GM10248 (cell line): ENCODE measurements at regions of chr10 and their contacts with region 1.

Region 1: GRCh38 chr10:48670978-48671913 is 13.4 kb upstream of the WDFY4 start:
- DNase-seq: peak; percentile 85
- CTCF ChIP-seq: no peak

Region 2: DNA sequence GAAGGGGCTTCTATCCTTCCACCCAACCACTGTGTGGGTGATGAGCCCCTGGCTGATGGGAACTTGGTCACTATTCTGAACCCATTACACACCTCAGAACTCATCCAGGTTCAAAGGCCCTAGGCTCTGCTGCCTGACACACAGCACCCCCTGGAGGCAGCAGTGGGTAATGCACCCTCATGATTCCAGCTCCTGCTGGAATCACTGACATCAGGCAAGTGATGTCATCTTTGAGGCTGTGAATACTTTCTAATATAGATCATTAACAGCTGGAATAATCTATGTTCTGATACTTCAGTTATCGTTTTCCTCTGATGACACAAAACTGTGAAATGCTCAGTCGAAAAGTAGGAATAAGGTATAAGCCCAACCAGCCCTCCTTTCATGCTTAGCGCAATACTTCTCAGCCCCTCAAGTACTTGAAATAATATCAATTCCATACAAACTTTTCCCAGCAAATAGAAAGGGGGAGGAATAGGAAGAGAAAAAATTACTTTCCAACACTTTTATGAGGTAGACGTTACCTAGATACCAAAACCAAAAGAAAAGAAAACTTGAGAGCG is 1330.6 kb before region 1 on chr10:
- CTCF ChIA-PET with region 1: no interaction called
- POLR2A ChIA-PET with region 1: no interaction called
- DNase-seq: peak; percentile 77
- CTCF ChIP-seq: peak; percentile 94

Region 3: DNA sequence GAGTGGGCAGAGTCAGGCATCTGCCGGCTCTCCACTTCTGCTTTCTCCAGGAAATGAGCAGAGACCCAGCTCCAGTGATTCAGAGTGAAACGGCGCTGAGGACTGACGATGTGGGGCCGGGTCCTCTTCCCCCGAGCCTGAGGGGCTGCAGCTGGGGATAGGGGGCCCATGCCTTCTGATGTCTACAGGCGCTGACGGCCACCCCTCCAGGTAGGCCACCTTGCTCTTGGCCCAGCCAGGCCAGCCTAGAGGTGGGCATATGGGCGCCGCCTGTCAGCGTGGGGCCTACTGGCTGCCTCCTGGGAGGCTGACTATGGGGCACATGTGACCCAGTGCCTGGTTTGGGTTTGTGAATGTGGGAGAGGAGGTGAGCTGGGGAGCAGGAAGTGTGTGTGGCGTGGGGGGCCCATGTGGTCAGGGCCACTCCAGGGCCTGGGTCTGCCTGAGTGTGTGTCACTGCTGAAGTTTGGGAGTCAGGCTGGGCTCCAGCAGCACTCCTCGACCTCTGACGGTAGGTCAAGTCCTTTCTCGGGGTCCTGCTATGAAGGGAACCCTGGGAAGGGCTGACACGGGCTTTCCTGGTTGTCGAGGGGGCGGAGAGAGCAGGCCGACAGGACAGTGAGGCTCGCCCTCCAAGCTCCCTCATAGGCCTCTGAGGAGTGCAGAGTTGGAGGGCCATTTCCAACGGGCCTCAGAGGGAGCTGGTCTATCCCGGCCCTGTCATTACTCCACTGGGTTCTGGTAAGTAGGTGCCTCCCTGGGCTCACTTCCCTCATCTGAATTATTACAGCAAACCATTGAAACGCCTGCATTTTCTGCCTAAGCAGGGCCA is 13.8 kb after region 1 on chr10 and contains the start of gene WDFY4:
- CTCF ChIA-PET with region 1: interaction called, 6 read pairs
- POLR2A ChIA-PET with region 1: interaction called, 12 read pairs
- DNase-seq: peak; percentile 83
- CTCF ChIP-seq: no peak